ENCODE measurements at regions of chr18 and their contacts with region 1.

Region 1: GRCh38 chr18:62030091-62030985 is 137.5 kb upstream of the RNF152 start:
- DNase-seq: no peak
- ATAC-seq: no peak
- H3K4me3 ChIP-seq: no peak overlapping the region
- H3K27ac ChIP-seq: no peak overlapping the region
- H3K4me1 ChIP-seq: no peaks in the 10 kb centered on the region
- H3K27me3 ChIP-seq: no peaks in the 10 kb centered on the region

Region 2: DNA sequence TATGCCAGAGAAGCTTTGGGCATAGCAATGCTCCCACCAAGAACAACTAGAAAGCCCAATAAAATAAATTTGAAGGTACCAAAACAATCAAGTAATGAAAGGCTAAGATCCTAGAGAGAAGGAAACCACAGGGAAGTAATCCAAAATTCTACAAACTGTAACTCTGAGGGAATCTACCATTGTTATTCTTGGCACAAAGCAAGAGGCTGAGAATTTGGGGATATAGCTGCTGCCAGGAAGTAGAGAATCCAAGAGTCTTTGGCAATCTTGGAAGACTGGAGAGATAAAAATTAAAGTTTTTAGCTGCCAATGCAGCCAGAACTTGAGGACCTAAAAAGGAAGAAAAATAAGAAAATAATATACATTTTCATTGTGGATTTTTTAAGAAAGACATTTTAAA is 88.0 kb after region 1 on chr18:
- intact Hi-C with region 1: loop called in 1 of 2 experiments (anchors 10 kb)
- DNase-seq: no peak
- ATAC-seq: peak; percentile 72
- H3K4me3 ChIP-seq: no peak overlapping the region
- H3K27ac ChIP-seq: no peak overlapping the region
- H3K4me1 ChIP-seq: peaks cover 0 to 1% of the 10 kb centered on the region in 2 donors
- H3K27me3 ChIP-seq: no peaks in the 10 kb centered on the region

Measured in aorta (tissue), 5 donors.